A549 (cell line): ENCODE measurements at regions of chrX and their contacts with region 1.

Region 1: DNA sequence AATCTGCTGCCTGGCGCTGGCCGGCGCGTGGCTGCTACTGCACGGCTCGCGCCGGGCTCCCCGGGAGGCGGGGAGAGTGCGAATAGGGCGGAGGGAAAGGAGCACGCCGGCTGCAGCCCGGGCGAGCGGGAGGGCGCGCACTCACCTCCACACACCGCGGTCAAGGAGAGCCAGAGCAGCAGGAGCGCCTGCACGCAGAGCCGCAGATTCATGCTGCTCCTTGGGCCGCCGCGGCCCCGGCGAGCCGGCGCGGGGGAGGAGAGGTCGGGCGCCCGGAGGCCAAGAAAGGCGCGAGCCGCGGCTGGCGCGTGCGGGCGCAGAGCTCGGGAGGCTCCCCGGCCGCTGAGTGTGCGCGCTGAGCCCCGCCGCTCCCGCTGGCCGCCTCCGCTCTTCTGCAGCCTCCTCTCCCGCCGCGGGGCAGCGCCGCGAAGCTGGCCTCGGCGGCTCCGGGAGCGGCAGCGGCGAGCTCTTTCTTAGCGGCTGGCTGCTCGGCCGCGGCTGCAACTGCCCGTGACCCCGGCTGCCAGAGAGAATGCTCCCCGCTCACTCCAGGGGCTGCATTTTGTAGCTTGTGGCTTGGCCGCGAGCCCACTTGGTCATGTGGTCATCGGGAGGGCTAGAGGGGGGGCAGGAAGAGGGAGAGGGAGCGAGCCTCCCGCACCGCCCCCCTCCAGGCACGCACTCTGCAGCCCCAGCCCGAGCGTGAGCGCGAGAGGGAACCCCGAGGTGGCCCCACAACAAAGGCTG is at the start of gene APLN:
- DNase-seq: peak; percentile 21 to 35
- ATAC-seq: peak; percentile 82 to 83
- H3K4me3 ChIP-seq: peak within 1 kb of the TSS; percentile 50
- H3K27ac ChIP-seq: peak within 1 kb of the TSS; percentile 55 to 87; a peak in 5 of 6 replicates
- H3K4me1 ChIP-seq: peaks cover 7% of the 10 kb centered on the region; the same call in 2 of the 3 replicates
- CTCF ChIP-seq: no peak
- EP300 ChIP-seq: no peak
- POLR2A ChIP-seq: no peak; the same call in 1 of the 2 replicates
- RAD21 ChIP-seq: no peak
- polyA plus RNA-seq, gene APLN: 0.15 and 0.18 TPM in 2 replicates

Region 2: DNA sequence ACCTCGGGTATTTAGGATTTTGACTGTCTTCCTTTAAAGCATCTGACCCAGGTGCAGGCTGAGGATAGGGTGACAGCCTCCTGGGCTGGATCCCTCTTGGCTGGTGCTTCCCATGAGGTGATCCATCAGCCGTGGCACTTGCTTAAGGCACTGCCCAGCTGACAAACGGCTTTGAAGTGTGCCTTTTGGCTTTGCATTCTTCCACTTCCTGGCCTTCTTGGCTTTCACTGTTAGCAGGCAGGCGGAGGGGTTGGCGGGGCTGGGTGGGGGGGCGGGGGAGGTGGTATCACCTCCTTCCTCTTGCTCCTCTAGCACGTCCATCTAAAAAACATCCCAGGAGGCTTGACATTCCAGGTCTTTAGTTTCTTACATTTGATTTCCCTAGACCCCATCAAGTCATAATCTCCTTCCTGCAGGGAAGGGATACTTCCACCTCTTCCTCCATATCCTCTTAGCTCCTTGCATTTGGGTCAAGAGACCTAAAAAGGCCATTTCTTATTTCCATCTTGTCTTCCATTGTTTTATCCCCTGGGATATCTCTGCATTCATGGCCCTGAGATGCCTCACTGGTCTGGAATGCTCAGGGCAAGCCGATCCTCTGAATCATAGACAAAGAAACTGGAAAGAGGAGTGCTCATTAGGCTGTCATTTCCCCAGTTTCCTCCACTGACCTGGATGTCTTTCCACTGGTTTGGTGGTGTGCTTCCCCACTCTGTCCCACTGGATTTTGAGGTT is 11.5 kb after region 1 on chrX:
- CTCF ChIA-PET with region 1: interaction called, 10 read pairs
- POLR2A ChIA-PET with region 1: no interaction called
- DNase-seq: peak; percentile 66 to 67
- ATAC-seq: peak; percentile 98 to 99
- H3K4me3 ChIP-seq: no peak overlapping the region
- H3K27ac ChIP-seq: peak overlapping the region; percentile 68 to 85
- H3K4me1 ChIP-seq: peaks cover 20% of the 10 kb centered on the region
- CTCF ChIP-seq: no peak
- EP300 ChIP-seq: no peak
- POLR2A ChIP-seq: no peak
- RAD21 ChIP-seq: no peak

Region 3: DNA sequence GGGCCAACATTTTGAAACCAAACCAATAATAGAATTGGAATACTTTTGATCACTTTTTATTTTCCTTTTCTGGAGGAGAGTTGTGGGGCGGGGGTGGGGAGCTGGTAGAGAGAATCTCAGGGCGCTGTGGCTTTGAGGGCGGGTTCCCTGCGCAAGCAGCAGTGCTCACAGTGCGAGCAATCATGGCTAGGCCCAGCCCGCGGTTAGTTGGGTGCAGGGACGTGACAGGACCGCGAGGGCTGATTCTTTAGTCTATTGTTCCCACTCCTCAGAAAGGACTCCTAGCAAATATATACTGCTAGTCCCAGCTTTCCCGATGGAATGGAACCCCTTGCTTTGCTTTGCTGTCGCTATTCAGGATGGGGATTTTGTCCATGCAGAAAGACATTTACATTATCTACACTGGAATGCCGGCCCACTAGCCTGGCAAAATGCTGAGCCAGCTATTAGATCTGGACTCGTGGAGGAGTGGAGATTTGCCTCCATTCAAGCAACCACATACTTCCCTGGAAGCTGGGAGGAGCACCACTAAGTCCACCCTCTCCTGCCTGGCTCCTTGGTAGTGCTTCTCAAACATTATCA is 24.1 kb after region 1 on chrX:
- CTCF ChIA-PET with region 1: interaction called, 21 read pairs
- POLR2A ChIA-PET with region 1: interaction called, 3 read pairs
- DNase-seq: peak in 1 of 2 experiments; percentile 7
- ATAC-seq: peak; percentile 13 to 48; a peak in 3 of 6 replicates
- H3K4me3 ChIP-seq: peak overlapping the region; percentile 45
- H3K27ac ChIP-seq: peak overlapping the region; percentile 78 to 94
- H3K4me1 ChIP-seq: peaks cover 10% of the 10 kb centered on the region; the same call in 2 of the 3 replicates
- CTCF ChIP-seq: no peak
- EP300 ChIP-seq: no peak
- POLR2A ChIP-seq: no peak
- RAD21 ChIP-seq: no peak

Region 4: DNA sequence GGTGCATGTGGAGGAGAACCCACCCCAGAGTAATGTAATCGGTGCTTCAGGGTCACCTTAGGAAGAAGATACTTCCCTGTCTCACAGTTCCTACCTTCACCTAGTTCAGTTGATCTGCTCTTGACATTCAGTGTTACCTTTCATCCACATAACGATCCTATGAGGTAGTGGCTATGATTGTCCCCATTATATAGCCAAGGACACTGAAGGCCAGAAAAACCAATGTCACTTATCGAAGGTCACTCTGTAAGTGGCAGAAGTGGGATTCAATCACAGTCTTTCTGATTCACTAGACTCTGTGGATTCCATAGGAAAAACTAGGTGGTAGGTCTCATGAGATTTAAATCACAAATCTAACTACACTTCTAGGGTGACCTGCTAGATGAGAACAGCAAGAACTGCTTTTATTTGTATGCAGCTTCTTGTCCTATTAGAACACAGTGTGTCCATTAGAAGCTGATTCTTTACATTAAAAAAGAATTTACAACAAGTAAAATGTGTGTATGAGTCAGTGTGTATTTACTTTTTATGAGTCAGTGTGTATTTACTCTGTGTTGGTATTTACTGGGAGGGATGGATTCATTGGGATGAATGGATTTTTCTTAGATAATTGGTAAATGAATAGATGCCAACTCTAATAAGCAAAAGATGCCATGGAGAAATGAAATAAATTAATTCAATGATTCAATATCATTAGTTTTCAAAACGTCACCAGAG is 43.4 kb after region 1 on chrX:
- CTCF ChIA-PET with region 1: no interaction called
- POLR2A ChIA-PET with region 1: no interaction called
- DNase-seq: peak; percentile 9 to 33
- ATAC-seq: peak in 1 of 2 experiments; percentile 79; a peak in 3 of 6 replicates
- H3K4me3 ChIP-seq: no peak overlapping the region
- H3K27ac ChIP-seq: peak overlapping the region in 1 of 2 experiments; percentile 54; a peak in 1 of 6 replicates
- H3K4me1 ChIP-seq: peaks cover 18% of the 10 kb centered on the region
- CTCF ChIP-seq: no peak
- EP300 ChIP-seq: no peak
- POLR2A ChIP-seq: no peak
- RAD21 ChIP-seq: no peak